Activated CD8-positive, alpha-beta T cell treated with anti-CD3 and anti-CD28 coated beads for 36 hours (primary cell): ENCODE measurements at regions of chr4 and their contacts with region 1.

Region 1: GRCh38 chr4:3009422-3009821 is 46.1 kb downstream of the GRK4 start:
- DNase-seq: peak; percentile 39
- ATAC-seq: peak; percentile 68
- H3K4me3 Mint-ChIP-seq: no peak overlapping the region
- H3K27ac Mint-ChIP-seq: no peak overlapping the region
- H3K4me1 Mint-ChIP-seq: peaks cover 8% of the 10 kb centered on the region
- H3K27me3 Mint-ChIP-seq: no peaks in the 10 kb centered on the region
- CTCF ChIP-seq: peak; percentile 29

Region 2: DNA sequence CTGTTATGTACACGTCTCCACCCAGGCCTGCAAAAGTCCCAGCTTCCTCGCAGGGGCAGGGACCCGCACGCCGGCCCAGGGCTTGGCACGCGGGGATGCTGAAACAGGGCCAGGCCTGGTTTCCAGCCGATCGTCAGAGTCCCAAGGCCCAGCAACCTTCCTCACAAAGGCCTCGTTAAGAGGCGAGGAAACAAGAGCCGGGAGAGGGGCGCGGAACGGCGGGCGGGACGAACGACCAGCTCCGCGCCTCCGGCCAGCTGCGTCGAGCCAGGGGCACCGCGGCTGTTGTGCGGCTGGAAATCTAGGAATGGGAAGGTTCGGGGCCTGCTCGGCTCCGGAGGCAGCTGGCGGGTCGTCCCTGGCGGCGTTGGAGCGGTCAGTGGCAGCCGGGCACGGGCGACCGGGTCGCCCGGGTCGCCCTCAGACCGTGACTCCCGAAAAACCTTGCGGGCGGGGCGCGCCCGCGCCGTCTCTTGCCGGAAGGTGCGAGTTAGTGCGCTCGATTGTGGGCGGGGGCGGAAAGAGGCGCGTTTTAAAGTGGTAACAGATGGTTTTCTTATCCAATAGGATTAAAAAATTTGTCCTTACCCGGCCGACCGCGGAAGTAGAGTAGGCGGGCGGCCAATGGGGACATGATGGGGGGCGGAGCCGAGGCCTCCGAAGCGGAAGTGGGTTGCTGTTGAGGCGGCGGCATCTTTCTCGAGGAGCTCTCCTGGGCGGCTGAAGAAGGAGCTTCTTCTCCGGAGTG is 540.8 kb before region 1 on chr4 and contains the start of gene RNF4:
- CTCF ChIA-PET with region 1: no interaction called
- POLR2A ChIA-PET with region 1: no interaction called
- intact Hi-C with region 1: no loop called
- DNase-seq: peak; percentile 99
- ATAC-seq: peak; percentile 87
- H3K4me3 Mint-ChIP-seq: peak within 1 kb of the TSS; percentile 96
- H3K27ac Mint-ChIP-seq: peak within 1 kb of the TSS; percentile 99
- H3K4me1 Mint-ChIP-seq: peaks cover 40% of the 10 kb centered on the region
- H3K27me3 Mint-ChIP-seq: no peaks in the 10 kb centered on the region
- CTCF ChIP-seq: no peak
- total RNA-seq, gene RNF4: 94.6 to 96.2 TPM

Region 3: GRCh38 chr4:3041192-3042142 is 32.0 kb after region 1 on chr4:
- CTCF ChIA-PET with region 1: interaction called, 13 read pairs
- POLR2A ChIA-PET with region 1: no interaction called
- intact Hi-C with region 1: no loop called
- DNase-seq: peak; percentile 55
- ATAC-seq: peak; percentile 59
- H3K4me3 Mint-ChIP-seq: peak overlapping the region; percentile 81
- H3K27ac Mint-ChIP-seq: peak overlapping the region; percentile 84
- H3K4me1 Mint-ChIP-seq: peaks cover 52% of the 10 kb centered on the region
- H3K27me3 Mint-ChIP-seq: peaks cover 12% of the 10 kb centered on the region
- CTCF ChIP-seq: no peak

Region 4: DNA sequence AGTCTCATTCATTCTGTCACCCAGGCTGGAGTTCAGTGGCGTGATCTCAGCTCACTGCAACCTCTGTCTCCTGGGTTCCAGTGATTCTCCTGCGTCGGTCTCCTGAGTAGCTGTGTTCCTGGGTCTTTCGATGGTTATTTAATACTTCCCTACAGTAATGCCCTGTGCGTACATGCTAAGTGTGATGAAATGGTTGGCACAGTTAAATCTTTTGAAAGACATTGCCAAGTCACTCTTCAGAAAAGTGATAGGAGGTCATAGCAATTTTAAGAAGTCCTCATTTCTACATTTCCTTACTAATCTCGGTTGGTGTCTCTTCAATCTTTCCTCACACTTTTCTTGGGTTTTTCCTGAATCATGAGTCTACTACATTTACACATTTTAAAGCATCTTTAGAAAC is 50.5 kb after region 1 on chr4:
- CTCF ChIA-PET with region 1: no interaction called
- POLR2A ChIA-PET with region 1: no interaction called
- intact Hi-C with region 1: no loop called
- DNase-seq: no peak
- ATAC-seq: no peak
- H3K4me3 Mint-ChIP-seq: no peak overlapping the region
- H3K27ac Mint-ChIP-seq: no peak overlapping the region
- H3K4me1 Mint-ChIP-seq: no peaks in the 10 kb centered on the region
- H3K27me3 Mint-ChIP-seq: peaks cover 3% of the 10 kb centered on the region
- CTCF ChIP-seq: no peak

Region 5: DNA sequence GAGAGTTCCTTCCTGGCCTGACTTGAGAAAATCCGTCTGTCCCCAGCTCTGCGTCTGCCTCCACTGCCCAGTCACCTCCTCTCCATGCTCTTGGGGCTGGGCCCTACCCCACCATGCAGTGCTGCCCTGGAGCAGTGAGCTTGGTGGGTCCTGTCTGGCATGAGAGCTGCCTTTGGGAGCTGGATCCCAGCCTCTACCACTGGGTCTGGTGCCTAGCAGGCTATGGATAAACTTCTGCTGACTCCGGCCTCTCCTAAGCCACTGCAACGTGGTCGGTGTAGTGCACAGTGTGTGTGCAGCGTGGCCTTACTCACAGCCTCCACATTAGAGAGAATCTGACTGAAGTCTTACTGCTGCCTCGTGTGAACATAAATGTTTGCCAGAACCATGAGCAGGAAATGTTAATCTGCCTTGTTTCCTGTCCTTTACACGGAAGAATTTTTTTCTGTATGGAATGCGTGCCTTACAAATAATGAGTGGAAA is 112.7 kb after region 1 on chr4:
- CTCF ChIA-PET with region 1: no interaction called
- POLR2A ChIA-PET with region 1: no interaction called
- intact Hi-C with region 1: no loop called
- DNase-seq: no peak
- ATAC-seq: no peak
- H3K4me3 Mint-ChIP-seq: no peak overlapping the region
- H3K27ac Mint-ChIP-seq: peak overlapping the region; percentile 18
- H3K4me1 Mint-ChIP-seq: peaks cover 17% of the 10 kb centered on the region
- H3K27me3 Mint-ChIP-seq: no peaks in the 10 kb centered on the region
- CTCF ChIP-seq: no peak